HepG2 (cell line): ENCODE measurements at regions of chr5 and their contacts with region 1.

Region 1: GRCh38 chr5:111742177-111742994 is 14.6 kb downstream of the NREP start:
- DNase-seq: peak; percentile 96
- ATAC-seq: peak; percentile 95
- H3K4me3 ChIP-seq: peak overlapping the region; percentile 41 to 51 (median 47); a peak in 5 of 6 replicates
- H3K27ac ChIP-seq: peak overlapping the region; percentile 93
- H3K4me1 ChIP-seq: peaks cover 75% of the 10 kb centered on the region
- H3K27me3 ChIP-seq: no peaks in the 10 kb centered on the region
- CTCF ChIP-seq: no peak
- EP300 ChIP-seq: peak; percentile 93
- POLR2A ChIP-seq: peak; percentile 31 to 42; a peak in 1 of 4 replicates
- RAD21 ChIP-seq: peak; percentile 44; the same call in 1 of the 2 replicates

Region 2: DNA sequence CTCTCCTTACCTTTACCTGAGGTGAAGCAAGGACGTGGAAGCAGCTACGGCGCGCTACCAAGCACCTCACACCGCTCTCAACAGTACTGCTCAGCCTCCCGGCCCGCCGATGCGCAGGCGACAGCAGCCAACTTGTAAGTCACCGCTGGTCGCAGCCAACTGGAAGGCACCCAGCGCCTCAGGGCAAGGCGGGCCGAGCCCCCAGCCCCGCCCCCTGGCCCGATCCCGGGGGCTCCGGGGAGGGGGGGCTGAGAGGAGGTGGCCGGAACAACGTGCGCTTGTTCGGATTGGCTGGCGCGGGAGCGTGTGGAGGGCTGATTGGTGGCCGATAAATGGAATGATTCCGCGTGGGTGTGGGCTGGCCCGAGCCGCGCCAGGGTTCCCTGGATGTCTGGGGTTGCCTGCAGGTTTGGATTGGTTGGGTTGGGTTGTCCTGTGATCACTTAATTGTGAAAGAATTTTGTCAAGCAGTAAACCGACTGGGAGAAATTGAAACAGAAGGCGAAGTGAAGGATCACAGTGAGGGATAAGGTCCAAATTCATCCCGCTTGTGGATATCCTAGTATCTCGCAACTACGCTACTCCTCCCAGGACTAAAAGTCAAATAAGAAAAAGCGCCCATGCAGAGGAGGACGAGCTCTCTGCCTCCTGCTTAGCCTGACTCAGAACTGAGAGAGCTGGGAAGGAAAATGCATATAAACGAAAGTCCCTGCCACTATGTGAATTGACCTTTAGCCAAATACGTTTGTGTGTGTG is 229.8 kb before region 1 on chr5 and contains the start of gene STARD4:
- CTCF ChIA-PET with region 1: no interaction called
- POLR2A ChIA-PET with region 1: no interaction called
- in situ Hi-C with region 1: no loop called
- intact Hi-C with region 1: loop called (anchors 5 kb)
- DNase-seq: peak; percentile 92
- ATAC-seq: peak; percentile 97
- H3K4me3 ChIP-seq: peak within 1 kb of the TSS; percentile 89 to 97 (median 96)
- H3K27ac ChIP-seq: peak within 1 kb of the TSS; percentile 97
- H3K4me1 ChIP-seq: peaks cover 42% of the 10 kb centered on the region
- H3K27me3 ChIP-seq: no peaks in the 10 kb centered on the region; a peak in 1 of 5 replicates
- CTCF ChIP-seq: no peak
- EP300 ChIP-seq: peak in 1 of 2 experiments; percentile 59; a peak in 2 of 4 replicates
- POLR2A ChIP-seq: peak; percentile 89 to 95
- RAD21 ChIP-seq: peak; percentile 52; the same call in 1 of the 2 replicates
- total RNA-seq, gene STARD4: 66.9 and 92.2 TPM in 2 replicates

Region 3: GRCh38 chr5:111596705-111597104 is 145.7 kb before region 1 on chr5:
- CTCF ChIA-PET with region 1: no interaction called
- POLR2A ChIA-PET with region 1: no interaction called
- in situ Hi-C with region 1: no loop called
- intact Hi-C with region 1: no loop called
- DNase-seq: no peak
- ATAC-seq: no peak
- H3K4me3 ChIP-seq: no peak overlapping the region
- H3K27ac ChIP-seq: no peak overlapping the region
- H3K4me1 ChIP-seq: no peaks in the 10 kb centered on the region
- H3K27me3 ChIP-seq: no peaks in the 10 kb centered on the region
- CTCF ChIP-seq: no peak
- EP300 ChIP-seq: no peak
- POLR2A ChIP-seq: no peak
- RAD21 ChIP-seq: no peak

Region 4: GRCh38 chr5:111691914-111692313 is 50.5 kb before region 1 on chr5:
- CTCF ChIA-PET with region 1: no interaction called
- POLR2A ChIA-PET with region 1: no interaction called
- in situ Hi-C with region 1: no loop called
- intact Hi-C with region 1: no loop called
- DNase-seq: no peak
- ATAC-seq: no peak
- H3K4me3 ChIP-seq: no peak overlapping the region
- H3K27ac ChIP-seq: no peak overlapping the region
- H3K4me1 ChIP-seq: no peaks in the 10 kb centered on the region
- H3K27me3 ChIP-seq: no peaks in the 10 kb centered on the region
- CTCF ChIP-seq: no peak
- EP300 ChIP-seq: no peak
- POLR2A ChIP-seq: no peak
- RAD21 ChIP-seq: no peak

Region 5: GRCh38 chr5:111703662-111704061 is 38.7 kb before region 1 on chr5:
- CTCF ChIA-PET with region 1: no interaction called
- POLR2A ChIA-PET with region 1: no interaction called
- in situ Hi-C with region 1: no loop called
- intact Hi-C with region 1: loop called (anchors 5 kb)
- DNase-seq: no peak
- ATAC-seq: no peak
- H3K4me3 ChIP-seq: no peak overlapping the region
- H3K27ac ChIP-seq: no peak overlapping the region
- H3K4me1 ChIP-seq: peaks cover 11% of the 10 kb centered on the region
- H3K27me3 ChIP-seq: no peaks in the 10 kb centered on the region
- CTCF ChIP-seq: no peak
- EP300 ChIP-seq: no peak
- POLR2A ChIP-seq: no peak
- RAD21 ChIP-seq: no peak

Region 6: DNA sequence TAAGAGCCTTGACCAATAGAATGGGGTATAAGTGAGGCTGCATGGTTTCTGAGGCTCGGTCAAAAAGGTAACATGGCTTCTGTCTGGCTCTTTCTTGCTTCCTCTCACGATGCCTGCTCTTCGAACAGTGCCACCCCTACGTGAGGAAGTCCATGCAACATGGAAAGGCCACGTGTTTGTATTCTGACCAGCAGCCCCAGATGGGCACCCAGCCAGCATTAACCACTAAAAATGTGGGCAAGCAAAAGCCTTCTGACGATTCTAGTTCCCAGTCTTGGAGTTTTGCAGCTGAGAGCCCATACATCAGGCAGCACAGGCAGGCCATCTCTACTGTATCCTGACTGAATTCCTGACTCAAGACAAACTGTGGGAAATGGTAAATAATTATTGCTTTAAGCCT is 38.8 kb after region 1 on chr5:
- CTCF ChIA-PET with region 1: no interaction called
- POLR2A ChIA-PET with region 1: no interaction called
- in situ Hi-C with region 1: no loop called
- intact Hi-C with region 1: no loop called
- DNase-seq: no peak
- ATAC-seq: no peak
- H3K4me3 ChIP-seq: no peak overlapping the region
- H3K27ac ChIP-seq: no peak overlapping the region
- H3K4me1 ChIP-seq: peaks cover 24% of the 10 kb centered on the region
- H3K27me3 ChIP-seq: peaks cover 0 to 4% of the 10 kb centered on the region in 2 experiments; a peak in 1 of 5 replicates
- CTCF ChIP-seq: no peak
- EP300 ChIP-seq: no peak
- POLR2A ChIP-seq: no peak
- RAD21 ChIP-seq: no peak